Activated CD4-positive, alpha-beta T cell treated with anti-CD3 and anti-CD28 coated beads, Interleukin-2, amount 10 ng/mL, durations not matched to agents 24 days and 14 days (primary cell): ENCODE measurements at regions of chr17 and their contacts with region 1.

Region 1: DNA sequence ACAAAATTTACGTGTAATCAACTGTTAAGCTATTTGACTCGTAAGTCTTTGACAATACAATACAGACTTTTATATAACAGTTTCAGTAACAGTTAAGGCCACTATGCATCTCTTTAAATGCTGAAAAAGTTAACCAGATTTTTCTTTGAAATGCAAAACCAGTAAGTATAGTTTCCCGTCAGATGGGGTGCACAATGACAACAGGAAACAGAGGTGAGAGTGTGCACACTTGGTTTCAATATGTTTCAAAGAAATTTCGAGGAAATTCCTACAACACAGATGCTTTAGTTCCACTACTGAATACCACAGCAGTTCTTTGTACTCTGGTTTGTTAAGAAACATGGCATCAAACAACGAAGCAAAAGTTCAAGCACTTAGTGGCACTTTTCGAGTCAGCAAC is 48.4 kb downstream of the RNF157 start:
- DNase-seq: peak; percentile 90
- H3K4me3 Mint-ChIP-seq: peak overlapping the region; percentile 68
- H3K27ac Mint-ChIP-seq: peak overlapping the region; percentile 89
- H3K4me1 Mint-ChIP-seq: peaks cover 68% of the 10 kb centered on the region
- H3K27me3 Mint-ChIP-seq: no peaks in the 10 kb centered on the region

Region 2: GRCh38 chr17:76072148-76072858 is 119.6 kb before region 1 on chr17 and contains the start of gene SRP68:
- intact Hi-C with region 1: loop called (anchors 5 kb)
- DNase-seq: peak; percentile 96
- H3K4me3 Mint-ChIP-seq: peak within 1 kb of the TSS; percentile 99
- H3K27ac Mint-ChIP-seq: peak within 1 kb of the TSS; percentile 100
- H3K4me1 Mint-ChIP-seq: peaks cover 36% of the 10 kb centered on the region
- H3K27me3 Mint-ChIP-seq: peaks cover 29% of the 10 kb centered on the region
- total RNA-seq, gene SRP68: 169 and 170 TPM in 2 replicates

Region 3: DNA sequence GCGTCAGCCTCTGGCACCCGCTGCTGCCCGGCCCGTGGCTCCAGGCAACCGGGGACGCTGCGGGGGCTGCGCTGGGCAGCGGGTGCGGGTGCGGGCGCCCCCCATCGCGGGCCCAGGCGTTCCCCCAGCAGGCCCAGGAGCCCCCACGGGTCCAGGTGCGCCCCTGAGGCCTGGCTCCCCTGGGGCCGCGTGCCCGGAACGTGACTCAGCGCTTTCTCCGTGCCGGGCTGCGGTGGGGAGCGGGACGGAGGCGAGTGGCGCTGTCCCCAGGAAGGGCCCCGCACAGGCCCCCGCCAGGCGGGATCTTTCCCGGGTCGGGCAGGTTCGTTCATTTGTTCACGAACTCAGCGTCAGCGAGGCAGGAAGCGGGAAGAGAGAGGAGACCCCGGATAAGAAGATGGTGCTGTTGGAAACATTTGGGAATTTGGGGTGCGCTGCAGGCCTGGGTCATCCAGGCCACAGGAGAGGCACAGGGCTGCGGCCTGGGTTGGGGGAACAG is 69.9 kb before region 1 on chr17:
- intact Hi-C with region 1: loop called (anchors 2 kb)
- DNase-seq: peak; percentile 69
- H3K4me3 Mint-ChIP-seq: peak overlapping the region; percentile 47
- H3K27ac Mint-ChIP-seq: peak overlapping the region; percentile 72
- H3K4me1 Mint-ChIP-seq: peaks cover 24% of the 10 kb centered on the region
- H3K27me3 Mint-ChIP-seq: no peaks in the 10 kb centered on the region

Region 4: DNA sequence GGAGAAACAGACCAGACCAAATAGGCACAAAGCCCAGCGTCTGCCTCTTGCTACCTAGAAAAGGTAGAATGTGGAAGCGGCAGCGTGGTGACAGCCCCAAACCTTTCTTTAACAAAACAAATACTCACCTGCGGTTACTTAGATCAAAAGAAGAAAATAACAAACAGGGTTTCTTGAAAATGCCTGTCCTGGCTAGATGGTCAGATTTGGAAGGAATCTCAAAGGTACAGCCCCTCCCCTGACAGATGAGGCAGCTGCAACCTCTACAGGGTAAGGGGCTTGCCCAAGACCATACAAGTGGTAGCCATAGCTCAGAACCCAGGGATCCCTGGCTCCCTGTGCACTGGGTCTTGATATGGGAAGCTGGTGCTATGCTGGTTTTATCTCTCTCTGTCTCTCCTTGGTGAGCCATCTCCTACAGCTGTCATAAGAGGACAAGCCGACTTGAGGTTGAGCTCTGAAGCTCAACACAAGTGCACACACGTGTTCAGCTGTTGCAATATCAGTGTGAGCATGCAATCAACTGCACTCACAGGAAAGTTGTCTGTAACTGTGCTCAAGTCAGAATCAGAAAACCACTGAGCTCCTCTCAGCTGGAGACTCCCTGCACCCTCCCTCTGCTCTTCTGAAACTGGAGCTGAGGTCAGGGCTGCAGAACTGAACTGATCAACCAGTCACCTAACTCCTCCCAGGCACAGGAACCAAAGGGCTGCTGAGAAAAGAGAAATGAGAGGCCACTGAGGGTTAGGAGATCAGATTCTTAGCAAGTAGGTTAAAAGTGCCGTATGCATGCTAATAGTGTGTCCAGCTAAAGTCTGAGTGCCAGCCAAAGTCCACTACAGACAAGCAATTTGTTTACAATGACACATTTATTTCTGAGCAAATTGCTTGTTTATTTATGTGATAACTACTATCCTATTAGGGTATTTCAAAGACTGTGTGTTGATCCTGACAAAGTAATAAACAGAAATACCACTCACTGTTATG is 54.5 kb after region 1 on chr17:
- intact Hi-C with region 1: loop called (anchors 1 kb)
- DNase-seq: peak; percentile 94
- H3K4me3 Mint-ChIP-seq: peak overlapping the region; percentile 75
- H3K27ac Mint-ChIP-seq: peak overlapping the region; percentile 83
- H3K4me1 Mint-ChIP-seq: peaks cover 69% of the 10 kb centered on the region
- H3K27me3 Mint-ChIP-seq: no peaks in the 10 kb centered on the region

Region 5: DNA sequence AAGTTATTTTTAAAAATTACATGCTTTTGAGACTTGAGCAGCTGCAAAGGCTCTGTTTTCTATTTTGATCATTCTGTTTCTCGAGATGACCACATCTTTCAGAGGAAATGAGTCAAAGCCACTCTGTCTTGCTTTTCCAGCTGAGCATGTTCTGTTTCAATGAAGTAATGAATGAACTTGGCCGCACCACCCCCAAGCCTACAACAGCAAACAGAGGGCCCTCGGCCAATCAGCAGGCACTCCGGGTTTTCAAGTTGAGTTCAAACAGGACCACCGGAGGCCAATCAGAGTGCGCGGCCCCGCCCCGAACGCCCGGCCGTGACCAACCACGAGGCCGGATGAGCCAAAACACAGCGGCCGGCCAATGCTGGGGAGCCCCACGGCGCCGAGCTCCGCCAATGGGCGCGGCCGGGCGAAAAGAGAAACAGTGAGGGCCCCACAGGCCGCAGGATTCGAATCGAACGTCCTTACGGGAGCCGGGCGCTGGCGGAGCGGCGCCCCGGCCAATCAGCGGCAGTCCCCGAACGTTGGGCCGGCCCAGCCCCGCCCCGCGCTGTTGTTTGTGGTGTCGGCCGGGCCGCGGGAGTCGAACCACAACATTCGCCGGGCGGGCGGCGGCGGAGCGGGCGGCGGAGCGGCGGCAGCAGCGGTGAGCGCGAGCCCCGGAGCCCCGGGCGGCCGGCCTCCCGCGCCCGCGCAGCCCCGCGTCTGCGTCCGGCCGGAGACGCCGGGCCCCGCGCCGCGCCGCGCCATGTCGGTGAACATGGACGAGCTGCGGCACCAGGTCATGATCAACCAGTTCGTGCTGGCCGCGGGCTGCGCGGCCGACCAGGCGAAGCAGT is 73.1 kb after region 1 on chr17 and contains the start of gene UBALD2:
- intact Hi-C with region 1: loop called (anchors 1 kb)
- DNase-seq: peak; percentile 100
- H3K4me3 Mint-ChIP-seq: peak within 1 kb of the TSS; percentile 94
- H3K27ac Mint-ChIP-seq: peak within 1 kb of the TSS; percentile 95
- H3K4me1 Mint-ChIP-seq: peaks cover 56% of the 10 kb centered on the region
- H3K27me3 Mint-ChIP-seq: no peaks in the 10 kb centered on the region
- total RNA-seq, gene UBALD2: 184 and 189 TPM in 2 replicates

Region 6: DNA sequence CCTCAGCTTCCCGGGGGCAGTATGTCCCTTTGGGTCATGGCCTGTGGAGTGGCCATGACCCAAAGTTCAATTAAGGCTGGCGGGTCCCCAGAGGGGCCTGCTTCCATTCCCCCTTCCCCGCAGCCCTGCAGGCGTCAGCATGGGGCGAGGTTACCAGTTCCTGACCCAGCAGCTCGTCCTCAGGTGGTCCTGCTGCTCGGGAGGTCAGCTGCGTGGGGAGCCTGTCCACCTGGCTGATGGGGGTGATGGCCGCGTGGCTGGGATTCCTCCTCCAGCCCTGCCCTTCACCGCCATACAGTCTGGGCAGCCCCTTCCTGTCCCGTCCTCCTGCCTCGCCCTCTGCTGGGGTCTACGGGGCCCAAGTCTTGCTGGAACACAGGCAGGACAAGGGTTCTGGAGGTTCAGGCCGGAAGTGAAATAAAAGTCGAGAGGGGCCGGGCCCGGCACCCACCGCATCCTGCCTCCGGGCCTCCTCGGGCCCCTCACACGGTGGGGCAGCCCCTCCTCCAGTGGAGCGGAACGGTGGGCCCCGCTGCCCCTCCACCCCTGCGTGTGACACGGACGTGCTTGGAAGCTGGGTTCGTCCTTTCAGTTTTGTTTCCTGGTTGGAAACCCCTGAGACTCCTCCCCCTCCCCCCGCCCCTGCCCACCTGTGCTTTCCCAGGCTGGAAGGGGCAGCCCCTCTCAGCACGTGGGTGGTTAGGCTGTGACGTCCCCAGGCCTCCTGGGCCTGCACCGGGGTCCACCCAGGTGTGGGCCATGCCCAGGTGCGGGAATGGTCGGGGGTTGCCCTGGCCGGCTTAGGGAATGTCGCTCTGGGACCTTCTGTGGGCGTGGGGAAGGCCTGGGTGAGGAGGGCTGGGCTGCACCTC is 80.0 kb after region 1 on chr17:
- intact Hi-C with region 1: loop called (anchors 1 kb)
- DNase-seq: peak; percentile 92
- H3K4me3 Mint-ChIP-seq: peak overlapping the region; percentile 83
- H3K27ac Mint-ChIP-seq: peak overlapping the region; percentile 96
- H3K4me1 Mint-ChIP-seq: peaks cover 51% of the 10 kb centered on the region
- H3K27me3 Mint-ChIP-seq: no peaks in the 10 kb centered on the region

Region 7: GRCh38 chr17:76384222-76384986 is 192.5 kb after region 1 on chr17 and contains the start of gene SPHK1:
- intact Hi-C with region 1: loop called (anchors 2 kb)
- DNase-seq: peak; percentile 95
- H3K4me3 Mint-ChIP-seq: peak within 1 kb of the TSS; percentile 92
- H3K27ac Mint-ChIP-seq: peak within 1 kb of the TSS; percentile 96
- H3K4me1 Mint-ChIP-seq: peaks cover 10% of the 10 kb centered on the region
- H3K27me3 Mint-ChIP-seq: no peaks in the 10 kb centered on the region
- total RNA-seq, gene SPHK1: 26.8 and 27.6 TPM in 2 replicates